ENCODE measurements at regions of chr20 and their contacts with region 1.

Region 1: DNA sequence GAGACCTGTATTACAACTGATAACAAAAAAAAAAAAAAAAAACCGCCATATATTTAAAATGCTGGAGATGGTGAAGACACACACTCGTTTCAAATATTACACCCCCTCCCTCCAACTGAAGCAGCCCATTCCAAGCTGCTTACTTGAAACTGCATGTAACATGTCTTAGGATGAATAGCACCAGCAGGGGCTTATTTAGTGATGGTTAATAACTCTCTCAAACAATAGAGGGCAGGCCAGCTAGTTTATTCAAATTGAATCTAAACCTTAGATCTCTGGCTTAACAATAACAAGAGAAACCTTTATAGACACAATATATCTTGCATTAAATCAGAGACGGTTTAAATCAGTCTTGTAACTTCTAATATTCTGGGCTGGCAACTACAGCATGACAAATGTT is 9.3 kb upstream of the JPH2 start:
- DNase-seq: no peak
- H3K4me3 ChIP-seq: no peak overlapping the region
- H3K27ac ChIP-seq: no peak overlapping the region
- H3K4me1 ChIP-seq: no peaks in the 10 kb centered on the region
- H3K27me3 ChIP-seq: no peaks in the 10 kb centered on the region
- CTCF ChIP-seq: no peak

Region 2: DNA sequence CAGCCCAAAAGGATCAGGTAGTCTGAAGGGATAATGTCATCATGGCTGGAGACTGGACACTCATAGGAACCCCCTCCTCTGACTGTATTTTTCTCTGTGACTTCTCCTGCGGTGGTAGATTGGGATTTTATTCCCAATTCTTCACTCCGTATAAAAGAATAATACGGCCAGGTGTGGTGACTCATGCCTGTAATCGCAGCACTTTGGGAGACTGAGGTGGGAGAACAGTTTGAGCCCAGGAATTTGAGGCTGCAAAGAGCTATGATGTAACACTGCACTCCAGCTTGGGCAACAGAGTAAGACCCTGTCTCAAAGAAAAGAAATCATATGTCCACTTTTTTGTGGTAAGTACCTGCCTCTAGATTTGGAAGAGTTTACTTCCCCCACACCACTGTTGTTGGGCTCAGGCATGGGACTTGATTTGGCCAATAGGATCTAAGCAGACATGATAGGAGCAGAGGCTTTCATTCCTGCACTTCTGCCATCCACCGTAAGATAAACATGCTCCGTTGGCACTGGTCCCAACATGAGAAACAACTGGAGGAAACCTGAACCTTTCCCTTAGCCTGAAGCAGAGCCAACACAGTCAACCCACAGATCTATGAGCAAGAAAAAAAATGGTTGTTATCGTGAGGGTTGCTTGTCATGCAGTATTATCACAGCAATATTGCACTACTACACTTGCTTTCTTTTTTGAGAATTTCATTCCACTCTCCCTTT is 91.3 kb before region 1 on chr20:
- dilution Hi-C with region 1: loop called (anchors 10 kb)
- DNase-seq: no peak
- H3K4me3 ChIP-seq: no peak overlapping the region
- H3K27ac ChIP-seq: no peak overlapping the region
- H3K4me1 ChIP-seq: peaks cover 9% of the 10 kb centered on the region
- H3K27me3 ChIP-seq: peaks cover 6% of the 10 kb centered on the region
- CTCF ChIP-seq: no peak

Measured in keratinocyte (primary cell).